ENCODE measurements at regions of chr6 and their contacts with region 1.

Region 1: GRCh38 chr6:165834613-165835259 is 171.7 kb upstream of the PDE10A start:
- DNase-seq: peak; percentile 11
- H3K4me3 ChIP-seq: no peak overlapping the region
- CTCF ChIP-seq: no peak

Region 2: DNA sequence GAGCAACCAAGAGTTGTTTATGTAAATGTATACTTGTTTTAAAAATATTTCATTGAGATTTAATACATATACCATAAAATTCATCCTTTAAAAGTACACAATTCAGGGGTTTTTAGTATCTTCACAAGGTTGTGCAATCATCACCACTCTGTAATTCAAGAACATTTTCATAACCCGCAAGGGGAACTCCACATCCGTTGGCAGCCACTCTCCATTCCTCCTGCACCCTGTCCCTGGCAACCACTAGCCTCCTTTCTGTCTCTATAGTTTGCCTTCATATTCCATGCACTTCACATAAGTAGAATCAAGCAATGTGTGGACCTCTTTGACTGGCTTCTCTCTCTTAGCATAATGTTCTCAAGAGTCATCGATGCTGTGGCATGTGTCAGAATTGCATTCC is 67.5 kb before region 1 on chr6:
- in situ Hi-C with region 1: no loop called
- DNase-seq: peak; percentile 41
- H3K4me3 ChIP-seq: no peak overlapping the region
- CTCF ChIP-seq: no peak

Region 3: GRCh38 chr6:165782134-165782533 is 52.6 kb before region 1 on chr6:
- in situ Hi-C with region 1: loop called (anchors 5 kb)
- DNase-seq: no peak
- H3K4me3 ChIP-seq: no peak overlapping the region
- CTCF ChIP-seq: no peak

Region 4: DNA sequence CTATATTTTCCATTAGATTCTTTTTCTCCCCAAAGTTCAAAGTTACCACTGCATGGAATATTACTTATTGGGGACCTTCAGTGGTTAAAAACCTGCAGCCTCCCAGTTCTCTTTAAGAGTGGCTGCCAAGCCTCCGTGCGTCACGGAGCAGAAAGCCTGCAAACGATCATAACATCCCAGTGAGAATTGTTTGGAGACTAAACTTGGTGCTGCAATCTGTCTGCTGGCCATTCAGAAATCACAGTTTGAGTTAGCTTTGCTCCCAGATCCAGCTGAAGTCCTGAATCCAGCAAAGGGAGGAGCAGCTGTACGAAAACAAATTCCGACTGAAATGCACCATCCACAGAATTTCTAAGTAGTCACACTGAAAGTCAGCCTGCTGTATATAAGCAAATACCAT is 41.9 kb after region 1 on chr6:
- in situ Hi-C with region 1: no loop called
- DNase-seq: peak; percentile 23
- H3K4me3 ChIP-seq: no peak overlapping the region
- CTCF ChIP-seq: no peak

Measured in astrocyte of the cerebellum (primary cell).